Gastrocnemius medialis (tissue), 4 donors: ENCODE measurements at regions of chr6 and their contacts with region 1.

Region 1: DNA sequence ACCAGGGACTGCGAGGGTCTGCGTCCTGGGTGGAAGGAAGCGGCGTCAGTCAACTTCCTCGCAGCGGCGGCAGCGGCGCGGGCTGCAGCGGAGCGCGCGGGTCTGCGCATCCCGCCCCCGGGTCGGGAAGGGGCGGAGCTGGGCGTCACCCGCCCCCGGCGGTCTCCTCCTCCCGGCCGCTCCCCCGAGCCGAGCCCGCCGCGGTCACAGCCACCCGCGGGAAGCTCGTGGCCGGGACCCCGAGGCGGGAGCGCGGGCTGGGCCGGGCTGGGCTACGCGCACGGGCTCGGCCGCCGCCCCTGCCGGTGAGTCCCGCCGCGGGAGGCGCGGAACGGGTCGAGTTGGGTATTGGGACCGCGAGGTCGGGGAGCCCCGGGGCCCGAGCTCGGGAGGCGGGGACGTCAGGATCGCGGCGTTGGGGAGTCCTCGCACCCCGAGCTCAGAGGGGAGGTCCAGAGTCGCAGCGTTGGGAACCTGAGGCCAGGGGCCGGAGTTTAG is at the start of gene PAQR8:
- DNase-seq: peak; percentile 13 to 27
- ATAC-seq: peak; percentile 52 to 68
- H3K4me3 ChIP-seq: peak within 1 kb of the TSS; percentile 51 to 79 (median 64)
- H3K27ac ChIP-seq: peak within 1 kb of the TSS; percentile 2 to 72 (median 60)
- H3K4me1 ChIP-seq: no peaks in the 10 kb centered on the region
- H3K27me3 ChIP-seq: peaks cover 10 to 16% (median 16%) of the 10 kb centered on the region in 3 donors
- CTCF ChIP-seq: no peak
- POLR2A ChIP-seq: peak; percentile 35 to 53
- total RNA-seq, gene PAQR8: 0.39 to 1.1 (median 0.72) TPM

Region 2: DNA sequence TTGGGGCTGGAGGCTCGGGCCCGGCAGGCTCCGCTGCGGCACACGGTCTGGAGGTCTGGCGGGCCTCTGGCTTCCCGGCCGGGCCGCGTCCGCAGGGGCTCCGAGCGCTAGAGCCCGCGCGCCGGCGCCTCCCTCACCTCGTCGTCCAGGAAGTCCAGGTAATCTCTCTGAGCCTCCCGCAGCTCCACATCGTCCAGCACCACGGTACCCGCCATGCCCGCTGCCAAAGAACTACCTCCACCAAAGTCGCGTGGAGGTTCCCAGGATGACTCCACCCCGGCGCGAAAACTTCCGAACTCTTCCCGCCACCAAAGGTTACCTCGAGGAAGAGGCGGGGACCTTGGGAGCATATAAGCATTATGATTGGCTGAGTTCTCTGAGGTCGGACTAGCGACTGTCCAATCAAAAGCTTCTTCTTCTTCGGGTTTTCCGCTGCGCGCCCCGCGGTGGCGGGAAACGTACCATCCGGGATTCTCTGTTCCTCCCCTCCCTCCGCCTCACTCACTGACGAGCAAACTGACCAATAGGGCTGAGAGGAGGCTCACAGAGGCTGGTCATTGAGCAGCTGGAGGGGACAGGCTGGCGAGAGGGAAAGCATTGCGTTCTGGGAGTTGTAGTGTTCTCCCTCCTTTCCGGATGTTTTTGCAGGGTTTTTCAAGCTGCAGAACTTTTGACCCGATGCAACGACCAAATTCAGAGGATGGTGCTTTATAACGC is 77.4 kb before region 1 on chr6 and contains the start of gene MCM3:
- in situ Hi-C with region 1: no loop called
- intact Hi-C with region 1: loop called (anchors 5 kb)
- DNase-seq: peak; percentile 96 to 98
- ATAC-seq: peak; percentile 100
- H3K4me3 ChIP-seq: peak within 1 kb of the TSS; percentile 75 to 91 (median 82)
- H3K27ac ChIP-seq: peak within 1 kb of the TSS; percentile 55 to 76 (median 70)
- H3K4me1 ChIP-seq: peaks cover 15 to 18% of the 10 kb centered on the region in 2 donors
- H3K27me3 ChIP-seq: no peaks in the 10 kb centered on the region
- CTCF ChIP-seq: peak in 1 of 5 experiments; percentile 23
- POLR2A ChIP-seq: no peak
- total RNA-seq, gene MCM3: 9.1 to 12.9 (median 9.8) TPM